ACHN (cell line): ENCODE measurements at regions of chr1 and their contacts with region 1.

Region 1: GRCh38 chr1:101288491-101288944 is 51.7 kb downstream of the S1PR1 start:
- DNase-seq: peak; percentile 69

Region 2: GRCh38 chr1:100921109-100921706 is 367.3 kb before region 1 on chr1:
- in situ Hi-C with region 1: loop called (anchors 25 kb)
- DNase-seq: peak; percentile 57

Region 3: GRCh38 chr1:101394041-101394440 is 105.5 kb after region 1 on chr1:
- in situ Hi-C with region 1: no loop called
- DNase-seq: no peak